Left cardiac atrium (tissue), 4 donors: ENCODE measurements at regions of chrX and their contacts with region 1.

Region 1: DNA sequence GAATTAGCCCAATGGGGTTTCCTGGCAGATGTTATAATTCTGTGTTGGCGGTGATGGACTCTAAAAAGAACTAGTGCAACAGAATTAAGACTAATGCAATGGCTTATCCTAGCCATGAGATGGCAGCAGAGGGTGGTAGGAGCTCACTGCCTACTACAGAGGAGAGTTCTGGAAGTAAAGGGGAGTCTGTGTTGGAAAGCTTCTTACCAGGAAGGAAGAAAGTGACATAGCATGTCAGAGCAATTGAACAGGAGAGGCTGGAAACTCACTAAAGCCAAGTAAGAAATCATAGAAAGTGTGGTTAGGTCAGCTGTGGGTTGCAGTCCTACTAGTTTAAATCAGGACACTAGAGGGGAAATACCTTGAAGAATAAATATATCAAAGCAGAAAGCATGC is 6.3 kb upstream of the TRPC5OS start:
- DNase-seq: no peak
- ATAC-seq: peak; percentile 85 to 88

Region 2: GRCh38 chrX:112043997-112044396 is 174.4 kb after region 1 on chrX:
- intact Hi-C with region 1: loop called in 1 of 2 experiments (anchors 5 kb)
- DNase-seq: no peak
- ATAC-seq: no peak

Region 3: GRCh38 chrX:112147206-112147605 is 277.6 kb after region 1 on chrX:
- intact Hi-C with region 1: loop called in 1 of 2 experiments (anchors 10 kb)
- DNase-seq: no peak
- ATAC-seq: no peak

Region 4: DNA sequence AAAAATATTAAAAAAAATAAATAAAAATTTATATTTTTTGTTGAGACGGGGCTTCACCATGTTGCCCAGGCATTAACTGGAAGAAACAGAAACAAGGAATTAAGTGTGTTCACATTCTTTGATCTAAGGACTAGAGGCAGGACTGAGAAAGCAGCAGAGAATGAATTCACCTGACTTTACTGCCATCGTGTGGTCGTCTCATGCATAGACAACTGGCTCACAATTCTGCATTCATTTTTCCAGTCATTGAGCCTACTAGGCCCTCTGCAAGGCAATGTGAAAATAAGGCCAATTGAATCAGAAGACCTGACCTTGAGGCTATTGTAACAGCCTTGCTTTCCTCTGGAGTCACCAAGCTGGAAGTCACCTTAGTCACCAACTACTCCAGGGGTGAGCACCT is 772.7 kb after region 1 on chrX:
- intact Hi-C with region 1: loop called in 1 of 2 experiments (anchors 10 kb)
- DNase-seq: peak; percentile 18
- ATAC-seq: peak; percentile 54 to 74